IMR-90 (cell line): ENCODE measurements at regions of chr18 and their contacts with region 1.

Region 1: DNA sequence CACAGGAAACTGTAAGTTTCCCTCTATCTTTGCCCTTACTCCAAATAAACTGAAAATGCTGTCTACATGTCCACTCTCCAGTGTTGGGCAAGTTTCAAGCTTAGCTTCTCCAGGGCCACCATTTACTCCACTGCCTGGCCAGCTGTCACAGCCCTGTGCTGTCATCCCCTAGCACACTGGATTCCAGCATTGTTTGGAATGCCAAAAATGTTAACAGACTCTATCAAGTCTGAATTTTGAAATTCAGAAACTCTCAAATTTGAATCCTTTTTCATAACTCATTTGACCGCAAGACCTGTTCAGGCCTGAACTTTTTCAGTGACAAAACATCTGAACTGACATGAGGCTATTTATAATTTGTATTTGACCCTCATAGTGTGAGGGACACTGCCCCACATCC is 5.2 kb upstream of the ARHGAP28 start:
- DNase-seq: no peak
- ATAC-seq: no peak
- H3K4me3 ChIP-seq: no peak overlapping the region
- H3K27ac ChIP-seq: no peak overlapping the region
- H3K4me1 ChIP-seq: peaks cover 8% of the 10 kb centered on the region
- H3K27me3 ChIP-seq: no peaks in the 10 kb centered on the region
- CTCF ChIP-seq: no peak
- POLR2A ChIP-seq: no peak
- RAD21 ChIP-seq: no peak

Region 2: DNA sequence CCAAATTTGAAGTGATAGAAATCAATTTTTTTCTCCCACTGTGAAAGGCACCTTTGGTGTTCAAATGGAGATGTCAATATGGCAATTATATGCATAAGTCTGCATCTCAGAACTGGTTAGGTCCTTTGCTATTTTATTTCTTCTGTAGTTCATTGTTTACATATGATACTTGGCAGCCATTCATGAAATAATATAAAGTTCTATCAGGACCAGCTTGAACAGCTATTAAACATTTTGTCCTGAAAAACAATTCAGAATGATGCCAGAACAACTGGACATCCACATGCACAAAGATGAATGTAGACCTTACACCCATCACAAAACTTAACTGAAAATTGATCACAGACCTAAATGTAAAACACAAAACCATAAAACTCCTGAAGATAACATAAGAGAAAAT is 36.7 kb before region 1 on chr18:
- CTCF ChIA-PET with region 1: no interaction called
- POLR2A ChIA-PET with region 1: no interaction called
- dilution Hi-C with region 1: no loop called
- in situ Hi-C with region 1: no loop called
- intact Hi-C with region 1: loop called (anchors 2 kb)
- DNase-seq: no peak
- ATAC-seq: no peak
- H3K4me3 ChIP-seq: no peak overlapping the region
- H3K27ac ChIP-seq: no peak overlapping the region
- H3K4me1 ChIP-seq: peaks cover 1% of the 10 kb centered on the region; the same call in 1 of the 2 replicates
- H3K27me3 ChIP-seq: peaks cover 2% of the 10 kb centered on the region; the same call in 1 of the 2 replicates
- CTCF ChIP-seq: no peak
- POLR2A ChIP-seq: no peak
- RAD21 ChIP-seq: no peak

Region 3: GRCh38 chr18:6714010-6714409 is 10.3 kb before region 1 on chr18:
- CTCF ChIA-PET with region 1: no interaction called
- POLR2A ChIA-PET with region 1: no interaction called
- dilution Hi-C with region 1: no loop called
- in situ Hi-C with region 1: no loop called
- intact Hi-C with region 1: no loop called
- DNase-seq: no peak
- ATAC-seq: peak; percentile 65
- H3K4me3 ChIP-seq: no peak overlapping the region
- H3K27ac ChIP-seq: no peak overlapping the region
- H3K4me1 ChIP-seq: peaks cover 3% of the 10 kb centered on the region
- H3K27me3 ChIP-seq: no peaks in the 10 kb centered on the region
- CTCF ChIP-seq: no peak
- POLR2A ChIP-seq: no peak
- RAD21 ChIP-seq: no peak

Region 4: GRCh38 chr18:6795307-6795706 is 71.0 kb after region 1 on chr18:
- CTCF ChIA-PET with region 1: no interaction called
- POLR2A ChIA-PET with region 1: no interaction called
- dilution Hi-C with region 1: no loop called
- in situ Hi-C with region 1: no loop called
- intact Hi-C with region 1: no loop called
- DNase-seq: peak; percentile 73
- ATAC-seq: peak; percentile 86
- H3K4me3 ChIP-seq: no peak overlapping the region
- H3K27ac ChIP-seq: peak overlapping the region; percentile 98; the same call in 1 of the 2 replicates
- H3K4me1 ChIP-seq: peaks cover 9% of the 10 kb centered on the region; the same call in 1 of the 2 replicates
- H3K27me3 ChIP-seq: no peaks in the 10 kb centered on the region
- CTCF ChIP-seq: no peak
- POLR2A ChIP-seq: no peak
- RAD21 ChIP-seq: no peak